PC-9 (cell line): ENCODE measurements at regions of chr13 and their contacts with region 1.

Region 1: GRCh38 chr13:99176309-99177276 is 24.1 kb upstream of the UBAC2 start:
- DNase-seq: peak; percentile 67 to 76
- H3K4me3 ChIP-seq: peak overlapping the region; percentile 47; the same call in 1 of the 2 replicates
- H3K27ac ChIP-seq: no peak overlapping the region
- H3K4me1 ChIP-seq: peaks cover 8% of the 10 kb centered on the region; the same call in 1 of the 2 replicates
- H3K27me3 ChIP-seq: no peaks in the 10 kb centered on the region
- CTCF ChIP-seq: peak; percentile 97

Region 2: DNA sequence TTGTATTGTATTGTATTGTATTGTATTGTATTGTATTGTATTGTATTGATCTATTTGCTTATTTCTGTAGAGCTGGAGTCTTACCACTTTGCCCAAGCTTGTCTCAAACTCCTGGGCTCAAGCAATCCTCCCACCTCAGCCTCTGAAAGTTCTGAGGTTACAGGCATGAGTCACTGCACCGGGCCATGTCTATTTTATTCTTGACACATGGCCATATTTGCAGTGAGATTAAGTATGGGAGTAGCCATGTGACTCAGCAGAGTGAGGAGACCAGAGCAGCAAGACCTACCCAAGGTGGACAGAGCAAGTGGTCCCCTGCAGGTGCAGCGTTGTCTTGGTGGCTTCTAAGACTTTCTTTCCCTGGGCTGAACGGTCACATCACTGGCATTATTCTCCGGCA is 25.1 kb before region 1 on chr13:
- CTCF ChIA-PET with region 1: interaction called, 13 read pairs
- POLR2A ChIA-PET with region 1: no interaction called
- intact Hi-C with region 1: no loop called
- DNase-seq: peak; percentile 57 to 95
- H3K4me3 ChIP-seq: peak overlapping the region; percentile 26; the same call in 1 of the 2 replicates
- H3K27ac ChIP-seq: peak overlapping the region; percentile 90
- H3K4me1 ChIP-seq: peaks cover 57% of the 10 kb centered on the region
- H3K27me3 ChIP-seq: no peaks in the 10 kb centered on the region
- CTCF ChIP-seq: no peak

Region 3: GRCh38 chr13:99436686-99437416 is 260.3 kb after region 1 on chr13:
- CTCF ChIA-PET with region 1: interaction called, 7 read pairs
- POLR2A ChIA-PET with region 1: no interaction called
- intact Hi-C with region 1: loop called (anchors 1 kb)
- DNase-seq: peak; percentile 73 to 75
- H3K4me3 ChIP-seq: no peak overlapping the region; the same call in 1 of the 2 replicates
- H3K27ac ChIP-seq: no peak overlapping the region
- H3K4me1 ChIP-seq: peaks cover 43% of the 10 kb centered on the region
- H3K27me3 ChIP-seq: no peaks in the 10 kb centered on the region
- CTCF ChIP-seq: peak; percentile 100

Region 4: GRCh38 chr13:99565478-99566124 is 389.0 kb after region 1 on chr13:
- CTCF ChIA-PET with region 1: no interaction called
- POLR2A ChIA-PET with region 1: no interaction called
- intact Hi-C with region 1: no loop called
- DNase-seq: no peak
- H3K4me3 ChIP-seq: no peak overlapping the region
- H3K27ac ChIP-seq: no peak overlapping the region
- H3K4me1 ChIP-seq: no peaks in the 10 kb centered on the region
- H3K27me3 ChIP-seq: no peaks in the 10 kb centered on the region
- CTCF ChIP-seq: no peak